AG04449 (cell line): ENCODE measurements at regions of chr1 and their contacts with region 1.

Region 1: GRCh38 chr1:65687428-65688214 is 105.1 kb upstream of the PDE4B start:
- DNase-seq: no peak
- H3K4me3 ChIP-seq: no peak overlapping the region
- CTCF ChIP-seq: peak; percentile 84

Region 2: DNA sequence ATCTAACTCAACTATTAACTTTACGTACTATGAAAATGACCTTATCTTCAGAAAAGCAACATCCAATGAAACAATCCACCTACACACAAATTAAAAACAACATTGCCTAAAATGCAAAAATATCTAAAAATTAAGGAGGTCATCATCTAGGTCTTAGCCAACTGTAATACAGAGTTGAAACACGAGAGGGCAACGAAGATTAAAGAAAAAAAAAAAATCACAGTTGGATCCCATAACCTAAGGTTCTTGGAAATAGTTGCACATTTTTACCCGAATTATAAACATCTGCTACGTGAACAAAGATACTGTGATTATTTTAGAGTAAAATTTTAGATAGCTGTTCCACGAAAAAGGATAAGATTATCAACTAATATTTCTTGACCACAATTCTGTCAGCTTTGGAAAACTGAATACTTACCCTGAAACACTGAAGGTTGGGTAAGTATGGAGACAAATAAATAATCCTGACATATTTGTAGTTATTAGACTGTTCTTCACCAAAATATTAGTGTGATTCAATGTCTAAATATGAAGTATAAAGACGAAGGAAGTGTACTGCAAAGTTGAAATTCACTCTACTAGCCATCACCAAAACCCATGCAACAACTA is 627.6 kb before region 1 on chr1:
- CTCF ChIA-PET with region 1: interaction called, 22 read pairs
- POLR2A ChIA-PET with region 1: no interaction called
- DNase-seq: no peak
- H3K4me3 ChIP-seq: no peak overlapping the region
- CTCF ChIP-seq: peak; percentile 27

Region 3: GRCh38 chr1:65230731-65231481 is 456.7 kb before region 1 on chr1:
- CTCF ChIA-PET with region 1: interaction called, 21 read pairs
- POLR2A ChIA-PET with region 1: no interaction called
- DNase-seq: no peak
- H3K4me3 ChIP-seq: no peak overlapping the region
- CTCF ChIP-seq: no peak

Region 4: GRCh38 chr1:65431111-65431705 is 256.4 kb before region 1 on chr1:
- CTCF ChIA-PET with region 1: interaction called, 45 read pairs
- POLR2A ChIA-PET with region 1: no interaction called
- DNase-seq: no peak
- H3K4me3 ChIP-seq: no peak overlapping the region
- CTCF ChIP-seq: peak; percentile 37

Region 5: GRCh38 chr1:65674522-65674921 is 13.1 kb before region 1 on chr1:
- CTCF ChIA-PET with region 1: interaction called, 11 read pairs
- POLR2A ChIA-PET with region 1: no interaction called
- DNase-seq: no peak
- H3K4me3 ChIP-seq: no peak overlapping the region
- CTCF ChIP-seq: no peak

Region 6: DNA sequence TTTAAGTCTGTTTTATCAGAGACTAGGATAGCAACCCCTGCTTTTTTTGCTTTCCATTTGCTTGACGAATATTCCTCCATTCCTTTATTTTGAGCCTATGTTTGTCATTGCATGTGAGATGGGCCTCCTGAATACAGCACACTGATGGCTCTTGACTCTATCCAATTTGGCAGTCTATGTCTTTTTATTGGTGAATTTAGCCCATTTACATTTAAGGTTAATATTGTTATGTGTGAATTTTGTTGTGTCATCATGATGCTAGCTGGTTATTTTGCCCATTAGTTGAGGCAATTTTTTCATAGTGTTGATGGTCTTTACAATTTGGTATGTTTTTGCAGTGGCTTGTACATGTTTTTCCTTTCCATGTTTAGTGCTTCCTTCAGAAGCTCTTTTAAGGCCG is 54.4 kb after region 1 on chr1:
- CTCF ChIA-PET with region 1: no interaction called
- POLR2A ChIA-PET with region 1: no interaction called
- DNase-seq: no peak
- H3K4me3 ChIP-seq: no peak overlapping the region
- CTCF ChIP-seq: no peak

Region 7: GRCh38 chr1:65762081-65762862 is 74.7 kb after region 1 on chr1:
- CTCF ChIA-PET with region 1: no interaction called
- POLR2A ChIA-PET with region 1: no interaction called
- DNase-seq: peak; percentile 70
- H3K4me3 ChIP-seq: peak overlapping the region; percentile 35
- CTCF ChIP-seq: no peak

Region 8: GRCh38 chr1:65896721-65897120 is 209.1 kb after region 1 on chr1:
- CTCF ChIA-PET with region 1: no interaction called
- POLR2A ChIA-PET with region 1: no interaction called
- DNase-seq: no peak
- H3K4me3 ChIP-seq: no peak overlapping the region
- CTCF ChIP-seq: no peak